B cell (primary cell): ENCODE measurements at regions of chr7 and their contacts with region 1.

Region 1: DNA sequence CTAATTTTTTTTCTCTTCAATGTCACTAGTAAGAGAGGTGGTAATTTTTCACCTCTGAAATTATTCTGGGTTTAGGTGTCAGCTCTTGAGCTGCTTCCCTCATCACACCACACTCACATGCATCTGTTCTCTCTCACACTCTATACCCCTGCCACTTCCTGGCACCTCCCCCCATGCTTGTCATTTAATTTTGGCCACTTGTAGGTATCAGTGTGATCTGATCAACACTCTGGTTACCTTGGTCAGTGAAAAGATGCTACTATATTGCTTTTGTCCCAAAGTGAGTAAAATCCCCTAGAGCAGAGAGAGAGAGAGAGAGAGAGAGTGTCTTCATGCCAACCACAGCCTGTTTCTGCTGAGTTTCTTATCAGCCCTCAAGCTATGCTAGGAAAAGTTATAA is 42.5 kb downstream of the STK17A start:
- DNase-seq: peak; percentile 58
- ATAC-seq: peak; percentile 64
- H3K4me3 ChIP-seq: peak overlapping the region in 1 of 5 experiments; percentile 6
- H3K4me3 Mint-ChIP-seq: peak overlapping the region; percentile 64
- H3K27ac ChIP-seq: peak overlapping the region; percentile 37 to 79
- H3K27ac Mint-ChIP-seq: peak overlapping the region; percentile 67
- H3K4me1 ChIP-seq: peaks cover 47 to 50% of the 10 kb centered on the region in 2 donors
- H3K4me1 Mint-ChIP-seq: peaks cover 81% of the 10 kb centered on the region
- H3K27me3 ChIP-seq: no peaks in the 10 kb centered on the region
- H3K27me3 Mint-ChIP-seq: no peaks in the 10 kb centered on the region
- CTCF ChIP-seq: no peak

Region 2: DNA sequence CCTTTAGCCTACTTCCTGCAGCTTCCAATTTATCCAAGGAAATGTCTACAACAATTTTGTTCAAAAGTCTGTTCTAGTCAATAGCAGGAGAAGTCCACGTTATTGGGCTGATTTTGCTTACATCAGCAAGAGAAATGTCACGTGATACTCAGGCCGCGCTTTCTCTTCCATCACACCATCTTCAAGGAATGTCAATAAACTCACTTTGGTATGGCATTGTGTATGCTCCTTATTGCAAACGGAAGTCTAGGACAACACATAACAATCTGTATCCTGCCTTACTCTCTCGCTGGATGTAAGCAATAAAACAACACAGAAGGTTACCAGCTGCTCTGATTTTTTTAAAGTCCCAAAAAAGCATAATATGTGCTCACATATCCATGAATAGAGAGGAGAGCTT is 59.7 kb before region 1 on chr7:
- CTCF ChIA-PET with region 1: no interaction called
- POLR2A ChIA-PET with region 1: no interaction called
- intact Hi-C with region 1: no loop called
- DNase-seq: no peak
- ATAC-seq: no peak
- H3K4me3 ChIP-seq: no peak overlapping the region
- H3K4me3 Mint-ChIP-seq: no peak overlapping the region
- H3K27ac ChIP-seq: no peak overlapping the region
- H3K27ac Mint-ChIP-seq: no peak overlapping the region
- H3K4me1 ChIP-seq: no peaks in the 10 kb centered on the region
- H3K4me1 Mint-ChIP-seq: no peaks in the 10 kb centered on the region
- H3K27me3 ChIP-seq: peaks cover 0 to 12% (median 6%) of the 10 kb centered on the region in 4 experiments
- H3K27me3 Mint-ChIP-seq: peaks cover 26% of the 10 kb centered on the region
- CTCF ChIP-seq: no peak

Region 3: DNA sequence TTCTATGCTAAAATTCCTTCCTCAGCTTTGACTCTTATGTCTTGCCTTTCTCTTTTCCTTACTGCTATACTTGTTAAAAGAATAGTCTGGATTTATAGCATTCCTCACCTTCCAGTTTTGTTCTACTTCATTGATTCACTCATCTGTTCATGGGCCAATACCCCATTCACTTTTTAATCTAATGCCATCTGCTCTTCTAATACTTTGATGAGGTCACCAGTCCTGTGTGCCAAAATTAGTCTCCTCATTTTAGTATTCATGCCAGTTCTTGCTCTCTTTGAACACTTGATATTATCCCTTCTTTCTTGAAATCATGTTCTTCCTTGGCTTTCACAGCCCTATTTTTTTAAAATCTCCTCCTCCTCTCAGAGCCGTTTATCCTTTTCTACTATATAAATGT is 23.2 kb before region 1 on chr7:
- CTCF ChIA-PET with region 1: no interaction called
- POLR2A ChIA-PET with region 1: interaction called, 9 read pairs
- intact Hi-C with region 1: loop called (anchors 2 kb)
- DNase-seq: no peak
- ATAC-seq: no peak
- H3K4me3 ChIP-seq: no peak overlapping the region
- H3K4me3 Mint-ChIP-seq: no peak overlapping the region
- H3K27ac ChIP-seq: peak overlapping the region in 1 of 2 donors; percentile 67
- H3K27ac Mint-ChIP-seq: no peak overlapping the region
- H3K4me1 ChIP-seq: peaks cover 27 to 58% of the 10 kb centered on the region in 2 donors
- H3K4me1 Mint-ChIP-seq: peaks cover 38% of the 10 kb centered on the region
- H3K27me3 ChIP-seq: no peaks in the 10 kb centered on the region
- H3K27me3 Mint-ChIP-seq: no peaks in the 10 kb centered on the region
- CTCF ChIP-seq: no peak

Region 4: GRCh38 chr7:43612599-43613589 is 12.6 kb before region 1 on chr7:
- CTCF ChIA-PET with region 1: interaction called, 3 read pairs
- POLR2A ChIA-PET with region 1: no interaction called
- intact Hi-C with region 1: loop called (anchors 2 kb)
- DNase-seq: no peak
- ATAC-seq: no peak
- H3K4me3 ChIP-seq: peak overlapping the region in 1 of 5 experiments; percentile 2
- H3K4me3 Mint-ChIP-seq: peak overlapping the region; percentile 38
- H3K27ac ChIP-seq: peak overlapping the region in 1 of 2 donors; percentile 75
- H3K27ac Mint-ChIP-seq: peak overlapping the region; percentile 57
- H3K4me1 ChIP-seq: peaks cover 45 to 51% of the 10 kb centered on the region in 2 donors
- H3K4me1 Mint-ChIP-seq: peaks cover 50% of the 10 kb centered on the region
- H3K27me3 ChIP-seq: no peaks in the 10 kb centered on the region
- H3K27me3 Mint-ChIP-seq: no peaks in the 10 kb centered on the region
- CTCF ChIP-seq: no peak